ENCODE measurements at regions of chr11 and their contacts with region 1.

Region 1: GRCh38 chr11:63032457-63032856 is 16.8 kb upstream of the SLC22A8 start:
- DNase-seq: no peak
- H3K4me3 ChIP-seq: no peak overlapping the region
- H3K27ac ChIP-seq: no peak overlapping the region
- H3K4me1 ChIP-seq: no peaks in the 10 kb centered on the region
- H3K27me3 ChIP-seq: peaks cover 9 to 11% of the 10 kb centered on the region in 2 experiments
- CTCF ChIP-seq: no peak
- POLR2A ChIP-seq: no peak

Region 2: DNA sequence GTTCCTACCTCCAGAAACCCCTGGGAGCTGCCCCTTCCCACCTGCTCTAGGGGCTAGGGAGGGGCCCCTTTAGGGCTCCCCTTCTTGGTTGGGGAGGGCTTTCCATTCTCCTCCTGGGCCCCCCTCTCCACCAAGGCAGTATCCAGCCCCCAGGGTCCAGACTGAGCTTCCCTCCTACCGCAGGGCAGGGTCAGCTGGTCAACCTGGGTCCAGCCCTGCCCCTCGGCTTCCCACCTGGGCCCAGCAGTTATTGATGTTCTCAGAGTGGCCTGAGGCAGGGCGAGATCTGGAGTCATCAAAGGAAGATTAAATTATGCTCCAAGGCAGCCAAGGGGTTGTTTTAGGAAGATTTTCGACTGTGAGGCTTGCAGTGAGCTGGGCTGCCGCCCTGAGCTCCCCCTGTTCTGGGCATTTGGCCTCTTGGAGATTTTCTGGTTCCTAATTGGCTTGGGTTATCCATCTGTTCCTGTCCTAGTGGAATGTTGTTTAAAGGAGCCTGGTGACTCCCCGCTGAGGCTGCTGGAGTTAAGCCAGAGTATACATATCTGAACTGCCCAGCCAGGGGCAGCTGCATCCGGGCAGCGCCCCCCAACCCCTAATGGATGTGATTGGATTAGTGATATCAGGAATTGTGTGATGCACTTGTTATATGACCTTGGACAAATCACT is 15.0 kb before region 1 on chr11:
- CTCF ChIA-PET with region 1: interaction called, 25 read pairs
- POLR2A ChIA-PET with region 1: no interaction called
- dilution Hi-C with region 1: no loop called
- intact Hi-C with region 1: no loop called
- DNase-seq: peak; percentile 95
- H3K4me3 ChIP-seq: no peak overlapping the region
- H3K27ac ChIP-seq: no peak overlapping the region
- H3K4me1 ChIP-seq: peaks cover 10% of the 10 kb centered on the region
- H3K27me3 ChIP-seq: peaks cover 0 to 3% of the 10 kb centered on the region in 2 experiments
- CTCF ChIP-seq: no peak
- POLR2A ChIP-seq: peak; percentile 44

Region 3: GRCh38 chr11:63132985-63133775 is 100.7 kb after region 1 on chr11:
- CTCF ChIA-PET with region 1: interaction called, 17 read pairs
- POLR2A ChIA-PET with region 1: no interaction called
- dilution Hi-C with region 1: no loop called
- intact Hi-C with region 1: loop called (anchors 1 kb)
- DNase-seq: no peak
- H3K4me3 ChIP-seq: no peak overlapping the region
- H3K27ac ChIP-seq: no peak overlapping the region
- H3K4me1 ChIP-seq: no peaks in the 10 kb centered on the region
- H3K27me3 ChIP-seq: peaks cover 9 to 11% of the 10 kb centered on the region in 2 experiments
- CTCF ChIP-seq: no peak
- POLR2A ChIP-seq: no peak

Region 4: DNA sequence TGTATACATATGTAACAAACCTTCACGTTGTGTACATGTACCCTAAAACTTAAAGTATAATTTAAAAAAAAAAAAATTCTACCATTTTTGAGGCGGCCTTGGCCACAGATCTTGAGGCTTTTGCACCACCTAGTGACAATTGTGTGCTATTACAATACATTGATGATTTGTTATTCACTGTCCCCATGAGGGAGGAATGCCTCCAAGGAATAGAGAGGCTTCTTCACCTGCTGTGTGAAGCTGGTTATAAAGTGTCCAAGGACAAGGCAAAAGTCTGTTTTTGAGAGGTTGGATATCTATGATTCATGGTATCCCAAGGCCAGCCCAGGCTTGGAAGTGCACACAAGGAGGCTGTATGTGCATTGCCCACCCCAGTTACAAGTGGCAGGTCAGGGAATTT is 180.3 kb after region 1 on chr11:
- CTCF ChIA-PET with region 1: interaction called, 77 read pairs
- POLR2A ChIA-PET with region 1: no interaction called
- dilution Hi-C with region 1: no loop called
- intact Hi-C with region 1: loop called (anchors 1 kb)
- DNase-seq: peak; percentile 14
- H3K4me3 ChIP-seq: no peak overlapping the region
- H3K27ac ChIP-seq: no peak overlapping the region
- H3K4me1 ChIP-seq: no peaks in the 10 kb centered on the region
- H3K27me3 ChIP-seq: peaks cover 0 to 2% of the 10 kb centered on the region in 2 experiments
- CTCF ChIP-seq: peak; percentile 34 to 36
- POLR2A ChIP-seq: no peak

Region 5: DNA sequence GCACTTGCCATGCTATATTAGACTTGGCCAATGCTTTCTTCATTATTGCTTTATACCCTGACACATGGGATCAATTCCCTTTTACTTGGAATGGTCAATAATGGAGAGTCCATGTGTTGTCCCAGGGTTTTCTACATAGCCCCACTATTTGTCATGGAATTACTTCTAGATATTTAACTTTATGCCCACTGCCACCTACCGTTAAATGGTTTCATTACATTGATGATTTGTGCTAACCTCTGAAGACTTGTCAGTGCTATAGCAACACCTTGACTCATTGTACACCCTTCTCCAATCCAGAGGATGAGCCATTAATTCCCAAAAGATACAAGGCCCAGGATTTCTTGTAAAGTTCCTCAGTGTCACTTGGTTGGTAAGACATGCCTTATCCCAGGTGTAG is 242.3 kb after region 1 on chr11:
- CTCF ChIA-PET with region 1: interaction called, 10 read pairs
- POLR2A ChIA-PET with region 1: no interaction called
- dilution Hi-C with region 1: no loop called
- intact Hi-C with region 1: loop called (anchors 2 kb)
- DNase-seq: peak; percentile 4
- H3K4me3 ChIP-seq: no peak overlapping the region
- H3K27ac ChIP-seq: no peak overlapping the region
- H3K4me1 ChIP-seq: no peaks in the 10 kb centered on the region
- H3K27me3 ChIP-seq: peaks cover 5 to 9% of the 10 kb centered on the region in 2 experiments
- CTCF ChIP-seq: no peak
- POLR2A ChIP-seq: no peak

Region 6: GRCh38 chr11:63445720-63446119 is 413.3 kb after region 1 on chr11:
- CTCF ChIA-PET with region 1: no interaction called
- POLR2A ChIA-PET with region 1: no interaction called
- dilution Hi-C with region 1: no loop called
- intact Hi-C with region 1: no loop called
- DNase-seq: no peak
- H3K4me3 ChIP-seq: no peak overlapping the region
- H3K27ac ChIP-seq: no peak overlapping the region
- H3K4me1 ChIP-seq: no peaks in the 10 kb centered on the region
- H3K27me3 ChIP-seq: peaks cover 4 to 5% of the 10 kb centered on the region in 2 experiments
- CTCF ChIP-seq: no peak
- POLR2A ChIP-seq: no peak